Ascending aorta (tissue), 2 donors: ENCODE measurements at regions of chr21 and their contacts with region 1.

Region 1: GRCh38 chr21:32727687-32728455 is at the start of gene SYNJ1:
- DNase-seq: peak; percentile 75 to 98
- H3K4me3 ChIP-seq: peak within 1 kb of the TSS; percentile 87 to 96
- H3K27ac ChIP-seq: peak within 1 kb of the TSS; percentile 90 to 93
- H3K4me1 ChIP-seq: peaks cover 5 to 22% of the 10 kb centered on the region in 2 donors
- H3K27me3 ChIP-seq: no peaks in the 10 kb centered on the region
- CTCF ChIP-seq: no peak
- total RNA-seq, gene SYNJ1: 12.1 TPM

Region 2: GRCh38 chr21:31659536-31660258 is 1068.2 kb before region 1 on chr21 and contains the start of gene SOD1:
- intact Hi-C with region 1: loop called (anchors 2 kb)
- DNase-seq: peak; percentile 82 to 97
- H3K4me3 ChIP-seq: peak within 1 kb of the TSS; percentile 73 to 76
- H3K27ac ChIP-seq: peak within 1 kb of the TSS; percentile 89 to 90
- H3K4me1 ChIP-seq: peaks cover 0 to 28% of the 10 kb centered on the region in 2 donors
- H3K27me3 ChIP-seq: no peaks in the 10 kb centered on the region
- CTCF ChIP-seq: no peak
- total RNA-seq, gene SOD1: 87.7 TPM

Region 3: DNA sequence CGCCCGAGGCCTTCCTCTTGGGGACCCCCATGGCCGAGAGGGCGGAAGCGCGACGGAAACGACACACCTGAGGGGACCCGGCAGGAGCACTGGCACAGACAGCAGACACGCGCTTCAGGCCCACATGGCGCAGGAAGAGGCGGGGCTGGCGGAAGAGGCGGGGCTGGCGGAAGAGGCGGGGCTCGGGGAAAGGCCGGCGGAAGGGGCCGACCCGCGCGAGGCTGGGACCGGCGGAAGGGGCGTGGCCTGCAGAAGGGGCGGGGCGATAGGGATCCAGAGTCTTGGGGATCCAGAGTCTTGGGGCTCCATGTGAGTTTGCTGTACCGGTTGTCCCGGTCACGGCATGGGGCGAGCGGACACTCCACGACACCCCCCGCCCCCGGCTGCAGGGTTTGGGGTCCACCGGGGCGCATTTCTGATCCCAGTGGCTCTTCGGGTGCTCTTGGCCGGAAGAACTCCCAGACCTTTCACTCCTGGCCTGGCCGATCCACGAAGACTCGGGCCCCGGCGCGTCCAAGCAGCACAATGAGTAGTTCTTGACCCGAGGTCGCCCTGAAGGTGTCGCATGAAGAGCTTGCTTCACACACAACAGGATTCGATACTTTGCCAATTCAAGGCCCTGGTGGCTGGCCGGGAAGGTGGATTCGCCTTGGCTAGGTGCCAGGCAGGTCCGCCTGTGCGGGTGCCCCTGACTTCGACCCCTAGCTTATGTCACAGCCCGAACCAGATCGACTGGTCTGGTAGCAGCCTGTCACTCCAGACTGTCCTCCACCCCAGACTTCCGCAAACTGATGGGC is 334.8 kb before region 1 on chr21 and contains the start of gene URB1:
- intact Hi-C with region 1: loop called (anchors 5 kb)
- DNase-seq: peak; percentile 59 to 93
- H3K4me3 ChIP-seq: peak within 1 kb of the TSS; percentile 82 to 88
- H3K27ac ChIP-seq: peak within 1 kb of the TSS; percentile 78 to 90
- H3K4me1 ChIP-seq: peaks cover 0 to 11% of the 10 kb centered on the region in 2 donors
- H3K27me3 ChIP-seq: no peaks in the 10 kb centered on the region
- CTCF ChIP-seq: no peak
- total RNA-seq, gene URB1: 35.4 TPM

Region 4: DNA sequence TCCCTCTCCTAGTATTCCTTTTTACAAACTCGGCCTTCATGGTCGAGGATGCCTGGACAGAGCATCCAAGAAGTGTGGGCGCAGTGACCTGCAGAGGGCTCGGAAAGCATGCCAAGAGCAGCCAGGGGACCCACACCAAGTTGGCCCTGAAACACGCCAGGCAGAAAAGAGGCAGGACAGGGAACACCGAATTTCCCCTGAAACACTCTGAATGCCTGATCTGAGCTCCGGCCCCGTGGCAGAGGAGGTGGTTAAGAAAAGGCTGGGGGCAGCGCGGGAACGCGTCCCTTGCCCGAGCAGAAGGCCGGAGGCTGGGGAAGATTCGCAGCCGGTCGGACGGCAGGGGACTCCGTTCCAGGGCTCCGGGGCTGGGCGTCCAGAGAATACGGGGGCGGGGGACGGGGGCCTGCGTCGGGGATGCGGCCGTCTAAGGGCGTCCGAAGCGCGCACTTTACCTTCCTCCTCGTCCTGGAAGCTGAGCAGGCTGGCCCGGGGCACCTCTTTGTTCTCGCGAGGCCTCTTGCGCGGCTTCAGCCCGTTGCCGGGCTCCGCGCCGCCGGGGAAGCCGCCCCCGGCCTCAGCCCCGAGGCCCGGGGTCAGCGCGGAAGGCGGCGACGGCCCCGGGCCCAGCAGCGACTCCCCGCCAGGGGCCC is 43.1 kb after region 1 on chr21:
- intact Hi-C with region 1: loop called (anchors 1 kb)
- DNase-seq: peak in 1 of 2 donors; percentile 77
- H3K4me3 ChIP-seq: peak overlapping the region; percentile 75 to 93
- H3K27ac ChIP-seq: peak overlapping the region; percentile 77 to 93
- H3K4me1 ChIP-seq: peaks cover 3 to 19% of the 10 kb centered on the region in 2 donors
- H3K27me3 ChIP-seq: no peaks in the 10 kb centered on the region
- CTCF ChIP-seq: peak in 1 of 3 experiments; percentile 5

Region 5: GRCh38 chr21:33641336-33642026 is 913.6 kb after region 1 on chr21 and contains the start of gene CRYZL1:
- intact Hi-C with region 1: loop called (anchors 5 kb)
- DNase-seq: peak; percentile 100
- H3K4me3 ChIP-seq: peak within 1 kb of the TSS; percentile 93 to 100
- H3K27ac ChIP-seq: peak within 1 kb of the TSS; percentile 84 to 95
- H3K4me1 ChIP-seq: peaks cover 5 to 20% of the 10 kb centered on the region in 2 donors
- H3K27me3 ChIP-seq: no peaks in the 10 kb centered on the region
- CTCF ChIP-seq: no peak
- total RNA-seq, gene CRYZL1: 20.0 TPM